ENCODE measurements at regions of chr10 and their contacts with region 1.

Region 1: GRCh38 chr10:93245779-93246178 is 172.1 kb downstream of the CYP26A1 start:
- DNase-seq: no peak
- ATAC-seq: no peak
- H3K4me3 ChIP-seq: no peak overlapping the region
- H3K27ac ChIP-seq: no peak overlapping the region
- H3K4me1 ChIP-seq: peaks cover 0 to 8% of the 10 kb centered on the region in 2 donors
- H3K27me3 ChIP-seq: no peaks in the 10 kb centered on the region
- CTCF ChIP-seq: no peak
- POLR2A ChIP-seq: no peak

Region 2: DNA sequence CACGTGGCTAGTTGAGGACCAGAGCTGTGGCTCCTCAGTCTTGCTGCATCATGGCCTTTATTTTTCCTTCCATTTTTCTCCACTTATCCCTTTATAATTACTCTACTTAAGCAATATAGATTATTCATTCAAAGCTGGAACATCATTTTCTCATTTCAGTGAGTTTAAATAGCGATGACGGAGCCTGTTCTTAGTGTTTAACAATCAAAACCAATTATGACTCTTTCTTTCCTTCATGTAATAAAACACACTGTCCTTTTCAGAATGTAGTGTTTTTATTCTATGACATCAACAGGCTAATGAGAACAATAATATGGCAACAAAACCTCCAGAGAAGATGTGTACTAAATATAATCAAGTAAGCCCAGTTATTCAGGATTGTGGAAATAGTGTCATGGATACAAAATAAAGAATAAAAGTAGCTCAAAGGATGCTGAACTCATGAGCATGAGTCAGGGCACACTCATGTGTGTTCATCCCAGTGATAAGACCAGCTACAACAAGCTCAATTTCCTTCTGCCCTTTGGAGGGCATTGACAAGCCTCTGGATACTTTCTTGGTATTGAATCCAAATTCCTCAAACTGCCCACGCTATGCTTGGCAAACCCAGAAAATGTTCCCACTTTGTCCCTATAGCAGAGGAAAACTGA is 16.3 kb after region 1 on chr10:
- in situ Hi-C with region 1: no loop called
- intact Hi-C with region 1: loop called (anchors 2 kb)
- DNase-seq: no peak
- ATAC-seq: no peak
- H3K4me3 ChIP-seq: no peak overlapping the region
- H3K27ac ChIP-seq: no peak overlapping the region
- H3K4me1 ChIP-seq: no peaks in the 10 kb centered on the region
- H3K27me3 ChIP-seq: no peaks in the 10 kb centered on the region
- CTCF ChIP-seq: no peak
- POLR2A ChIP-seq: no peak

Measured in gastrocnemius medialis (tissue), 4 donors.